ENCODE measurements at regions of chr2 and their contacts with region 1.

Region 1: DNA sequence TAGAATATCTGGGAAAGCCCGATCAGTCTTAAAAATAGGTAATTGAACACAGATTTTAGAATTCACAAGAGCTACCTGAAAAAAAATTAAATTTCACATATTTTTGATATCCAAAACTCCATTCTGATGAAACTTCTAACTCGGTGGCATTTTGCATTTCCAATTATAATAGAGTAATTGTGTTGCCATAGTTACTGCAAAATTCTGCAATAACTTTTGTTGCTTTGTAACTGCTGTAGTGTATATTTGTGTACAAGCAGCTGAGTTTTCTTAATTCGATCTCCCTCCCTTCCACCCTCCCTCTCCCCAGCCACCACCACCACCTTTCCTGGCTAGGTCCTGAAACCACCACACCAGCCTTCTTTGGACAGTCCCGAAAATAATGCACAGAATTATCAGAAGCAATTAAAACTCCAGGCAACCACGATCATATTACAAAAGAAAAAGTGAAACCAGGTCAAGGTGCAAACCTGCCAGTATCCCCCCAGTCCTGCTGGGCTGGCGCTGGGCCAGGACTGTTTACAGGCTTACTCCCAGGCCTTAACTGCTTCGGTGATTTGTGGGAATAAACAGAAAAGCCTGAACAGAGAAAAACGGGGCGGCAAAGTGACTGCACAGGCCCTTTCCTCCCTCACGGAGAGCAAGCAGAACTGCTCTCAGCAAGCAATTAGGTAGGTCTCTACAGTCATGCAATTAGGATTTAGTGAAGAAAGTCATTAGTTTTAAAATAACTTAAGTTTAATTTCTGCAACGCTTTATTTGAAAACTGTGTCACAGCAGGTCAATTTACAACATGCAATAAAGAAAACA is 1.5 kb downstream of the HDAC4 start:
- DNase-seq: peak; percentile 63 to 75
- ATAC-seq: no peak

Region 2: GRCh38 chr2:239143858-239144718 is 255.2 kb before region 1 on chr2:
- intact Hi-C with region 1: loop called in 1 of 2 experiments (anchors 10 kb)
- DNase-seq: no peak
- ATAC-seq: peak; percentile 54

Measured in left colon (tissue), 2 donors.